AG04450 (cell line): ENCODE measurements at regions of chr5 and their contacts with region 1.

Region 1: DNA sequence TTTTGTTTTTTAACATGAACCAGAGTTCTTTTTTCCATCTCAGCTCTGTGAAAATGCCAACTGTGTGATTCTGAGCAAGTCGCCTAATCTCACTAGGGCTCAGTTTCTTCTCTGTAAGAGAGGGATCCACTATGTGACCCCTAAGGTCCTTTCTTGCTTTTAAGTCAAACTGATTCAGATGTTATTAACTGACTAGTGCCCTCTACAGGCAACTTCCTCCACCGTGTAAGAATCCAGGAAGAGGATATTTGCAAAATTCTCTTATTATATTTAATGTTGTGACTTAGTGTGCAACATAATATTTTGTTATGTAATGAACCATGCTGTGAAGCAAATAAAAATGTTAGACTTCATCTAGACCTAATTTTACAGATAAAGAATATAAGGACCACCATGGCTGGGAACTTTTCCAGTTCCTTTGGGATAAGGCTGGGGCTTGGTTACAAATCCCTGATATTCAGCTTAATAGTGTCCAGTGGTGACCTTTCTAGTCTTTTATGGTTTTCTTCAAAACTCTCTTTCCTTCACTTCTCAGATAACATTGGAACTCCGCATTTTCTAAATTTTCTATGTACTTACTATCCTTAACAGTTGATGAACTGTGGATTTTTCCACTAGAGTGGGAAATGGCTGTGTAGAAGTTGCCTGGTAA is 244.7 kb downstream of the PIK3R1 start:
- DNase-seq: no peak
- H3K4me3 ChIP-seq: no peak overlapping the region
- H3K27ac ChIP-seq: no peak overlapping the region
- H3K27me3 ChIP-seq: no peaks in the 10 kb centered on the region
- CTCF ChIP-seq: peak; percentile 72

Region 2: GRCh38 chr5:68347536-68347935 is 112.7 kb before region 1 on chr5:
- CTCF ChIA-PET with region 1: no interaction called
- POLR2A ChIA-PET with region 1: no interaction called
- DNase-seq: no peak
- H3K4me3 ChIP-seq: no peak overlapping the region
- H3K27ac ChIP-seq: no peak overlapping the region
- H3K27me3 ChIP-seq: peaks cover 4% of the 10 kb centered on the region
- CTCF ChIP-seq: no peak

Region 3: GRCh38 chr5:68476854-68477253 is 16.6 kb after region 1 on chr5:
- CTCF ChIA-PET with region 1: interaction called, 13 read pairs
- POLR2A ChIA-PET with region 1: no interaction called
- DNase-seq: no peak
- H3K4me3 ChIP-seq: no peak overlapping the region
- H3K27ac ChIP-seq: no peak overlapping the region
- H3K27me3 ChIP-seq: no peaks in the 10 kb centered on the region
- CTCF ChIP-seq: 0 out of 2 replicates have a peak, but pooled peaks have one; percentile 5